WTC11 (cell line): ENCODE measurements at regions of chr13 and their contacts with region 1.

Region 1: GRCh38 chr13:95660981-95661581 is 15.9 kb upstream of the DNAJC3 start:
- DNase-seq: no peak
- ATAC-seq: peak; percentile 24; the same call in 1 of the 2 replicates
- H3K4me3 Mint-ChIP-seq: no peak overlapping the region
- H3K27ac Mint-ChIP-seq: no peak overlapping the region
- H3K4me1 Mint-ChIP-seq: no peaks in the 10 kb centered on the region
- H3K27me3 Mint-ChIP-seq: peaks cover 7% of the 10 kb centered on the region; the same call in 1 of the 2 replicates
- CTCF ChIP-seq: peak; percentile 28; the same call in 1 of the 2 replicates

Region 2: GRCh38 chr13:95411428-95412040 is 249.5 kb before region 1 on chr13:
- CTCF ChIA-PET with region 1: no interaction called
- POLR2A ChIA-PET with region 1: no interaction called
- DNase-seq: no peak
- ATAC-seq: no peak
- H3K4me3 Mint-ChIP-seq: no peak overlapping the region
- H3K27ac Mint-ChIP-seq: no peak overlapping the region
- H3K4me1 Mint-ChIP-seq: no peaks in the 10 kb centered on the region
- H3K27me3 Mint-ChIP-seq: no peaks in the 10 kb centered on the region
- CTCF ChIP-seq: no peak

Region 3: DNA sequence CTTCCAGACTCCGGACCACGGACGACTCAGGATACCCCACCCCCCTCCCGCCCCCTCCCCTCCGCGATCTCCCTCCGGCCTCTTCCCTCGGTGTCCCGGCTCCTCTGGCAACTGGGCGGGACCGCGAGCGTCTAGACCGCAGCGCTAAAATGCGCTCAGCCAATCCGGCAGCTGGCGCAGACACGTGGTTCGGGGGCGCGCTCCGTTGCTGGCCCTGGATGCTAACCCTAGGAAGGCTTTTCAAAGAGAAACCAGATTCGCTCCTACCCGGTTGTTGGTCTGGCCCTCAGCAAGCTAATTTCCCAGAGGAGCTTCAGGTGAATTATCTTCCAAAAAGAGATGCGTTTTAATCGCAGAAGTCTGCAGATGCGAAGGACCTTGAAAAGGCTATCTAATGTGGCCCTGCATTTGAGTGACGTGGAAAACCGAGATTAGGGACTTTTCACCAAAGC is 16.5 kb before region 1 on chr13 and contains the start of gene DZIP1:
- CTCF ChIA-PET with region 1: interaction called, 30 read pairs
- POLR2A ChIA-PET with region 1: interaction called, 4 read pairs
- DNase-seq: peak; percentile 92
- ATAC-seq: peak; percentile 86
- H3K4me3 Mint-ChIP-seq: peak within 1 kb of the TSS; percentile 89
- H3K27ac Mint-ChIP-seq: no peak within 1 kb of the TSS
- H3K4me1 Mint-ChIP-seq: peaks cover 19% of the 10 kb centered on the region
- H3K27me3 Mint-ChIP-seq: peaks cover 9% of the 10 kb centered on the region
- CTCF ChIP-seq: no peak
- total RNA-seq, gene DZIP1: 31.0 to 33.5 TPM (median 32.0 TPM) in 3 replicates

Region 4: GRCh38 chr13:95671597-95671996 is 10.5 kb after region 1 on chr13:
- CTCF ChIA-PET with region 1: interaction called, 13 read pairs
- POLR2A ChIA-PET with region 1: no interaction called
- DNase-seq: no peak
- ATAC-seq: no peak
- H3K4me3 Mint-ChIP-seq: no peak overlapping the region
- H3K27ac Mint-ChIP-seq: no peak overlapping the region
- H3K4me1 Mint-ChIP-seq: peaks cover 22% of the 10 kb centered on the region
- H3K27me3 Mint-ChIP-seq: peaks cover 28% of the 10 kb centered on the region
- CTCF ChIP-seq: no peak

Region 5: GRCh38 chr13:95834134-95834765 is 173.2 kb after region 1 on chr13:
- CTCF ChIA-PET with region 1: interaction called, 12 read pairs
- POLR2A ChIA-PET with region 1: no interaction called
- DNase-seq: peak; percentile 63
- ATAC-seq: peak; percentile 86
- H3K4me3 Mint-ChIP-seq: no peak overlapping the region
- H3K27ac Mint-ChIP-seq: no peak overlapping the region
- H3K4me1 Mint-ChIP-seq: peaks cover 4% of the 10 kb centered on the region
- H3K27me3 Mint-ChIP-seq: no peaks in the 10 kb centered on the region; the same call in 1 of the 2 replicates
- CTCF ChIP-seq: peak; percentile 82